PC-9 (cell line): ENCODE measurements at regions of chr7 and their contacts with region 1.

Region 1: GRCh38 chr7:92421676-92422435 is 25.4 kb upstream of the GATAD1 start:
- DNase-seq: no peak
- H3K4me3 ChIP-seq: no peak overlapping the region
- H3K27ac ChIP-seq: no peak overlapping the region
- H3K4me1 ChIP-seq: 0 out of 2 replicates have a peak, but pooled peaks cover 5% of the 10 kb centered on the region
- H3K27me3 ChIP-seq: no peaks in the 10 kb centered on the region
- CTCF ChIP-seq: no peak

Region 2: DNA sequence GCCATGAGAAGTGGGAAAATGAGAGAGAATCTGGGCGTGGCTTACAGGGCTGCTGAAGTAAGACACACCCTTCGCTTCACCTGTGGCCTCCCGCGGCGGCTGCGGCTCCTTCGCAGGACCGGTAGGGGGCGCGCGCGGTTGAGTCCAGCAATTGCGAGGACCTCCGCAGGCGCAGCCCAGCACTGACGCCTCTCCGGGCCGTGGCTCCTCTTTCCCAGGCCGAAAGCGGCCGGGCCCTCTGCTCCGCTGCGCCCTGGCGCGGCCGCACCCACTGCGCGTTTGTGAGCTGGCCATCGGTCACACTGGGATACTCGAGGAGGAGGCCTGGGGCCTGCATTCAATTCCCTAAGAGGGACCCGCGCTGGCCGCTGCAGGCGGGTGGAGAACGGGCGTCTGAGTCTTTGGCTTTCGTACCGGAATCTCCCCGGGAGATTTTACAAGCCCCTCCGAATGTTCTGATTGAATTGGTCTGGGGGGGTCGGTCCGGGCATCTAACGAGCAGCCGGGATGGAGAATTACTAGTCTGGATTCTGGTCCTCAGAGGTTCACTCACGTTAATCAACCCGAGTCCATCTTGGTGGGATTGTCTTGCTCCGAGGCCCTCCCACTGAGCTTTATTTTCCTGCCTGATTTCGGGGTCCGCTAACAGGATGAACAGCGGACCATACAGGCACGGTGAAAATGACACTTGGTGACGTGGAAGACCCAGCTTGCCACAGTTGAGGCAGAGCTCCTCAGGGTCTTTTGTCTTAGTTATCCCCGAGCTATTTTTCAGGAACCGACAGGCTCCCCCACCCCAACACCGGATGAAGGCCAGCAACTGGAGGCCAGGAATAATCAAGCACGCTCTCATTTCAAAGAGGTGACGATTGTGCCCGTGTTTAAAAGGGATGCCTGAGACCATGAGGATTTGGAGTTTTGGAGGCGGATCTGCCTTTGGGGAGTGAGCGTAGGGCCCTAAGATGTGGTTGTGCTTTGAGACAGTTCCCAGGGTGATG is 242.6 kb before region 1 on chr7 and contains the start of gene LRRD1:
- CTCF ChIA-PET with region 1: no interaction called
- POLR2A ChIA-PET with region 1: no interaction called
- intact Hi-C with region 1: loop called (anchors 2 kb)
- DNase-seq: peak; percentile 60 to 96
- H3K4me3 ChIP-seq: 0 out of 2 replicates have a peak within 1 kb of the TSS, but pooled peaks have one; percentile 24
- H3K27ac ChIP-seq: no peak within 1 kb of the TSS
- H3K4me1 ChIP-seq: 0 out of 2 replicates have a peak, but pooled peaks cover 9% of the 10 kb centered on the region
- H3K27me3 ChIP-seq: no peaks in the 10 kb centered on the region
- CTCF ChIP-seq: peak; percentile 72
- total RNA-seq, gene LRRD1: not detected in 2 replicates